ENCODE measurements at regions of chr9 and their contacts with region 1.

Region 1: GRCh38 chr9:77456829-77457437 is 191.2 kb downstream of the GNA14 start:
- DNase-seq: peak; percentile 81
- CTCF ChIP-seq: peak; percentile 84

Region 2: DNA sequence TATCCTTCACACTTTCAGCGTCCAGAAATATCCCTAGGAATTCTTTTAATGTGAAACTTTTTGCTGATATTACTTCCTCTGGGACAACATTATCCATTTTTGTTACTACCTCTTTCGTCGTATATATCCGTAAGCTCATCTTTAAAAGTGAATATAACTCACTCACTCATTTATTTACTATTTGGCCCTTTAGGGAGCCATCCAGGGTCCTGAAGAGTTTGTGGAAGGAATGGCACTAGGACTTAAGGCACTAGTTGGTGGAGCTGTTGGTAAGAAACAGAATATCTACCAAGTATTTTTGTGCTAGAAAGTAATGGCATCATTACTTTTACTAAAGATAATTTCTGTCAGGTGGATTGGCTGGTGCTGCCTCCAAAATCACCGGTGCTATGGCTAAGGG is 86.9 kb before region 1 on chr9:
- in situ Hi-C with region 1: no loop called
- DNase-seq: no peak
- CTCF ChIP-seq: no peak

Region 3: DNA sequence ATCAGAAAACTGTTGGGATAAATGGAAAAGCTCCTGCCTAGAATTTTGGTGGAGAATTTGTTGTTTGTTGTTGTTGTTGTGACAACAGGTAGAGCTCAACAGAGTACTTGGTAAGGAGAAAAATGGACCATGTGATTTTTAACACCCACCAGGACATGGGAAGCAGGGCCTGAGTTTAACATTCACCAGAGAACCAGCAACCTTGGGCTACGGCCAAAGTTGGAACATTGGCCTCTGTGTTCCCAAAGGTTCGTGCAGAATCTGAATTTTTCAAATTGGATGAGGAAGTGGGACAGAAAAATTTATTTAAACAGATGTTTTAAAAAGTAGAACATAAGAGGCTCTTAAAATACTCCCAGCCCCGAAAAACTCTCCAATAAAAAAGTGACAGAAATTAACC is 64.2 kb after region 1 on chr9:
- in situ Hi-C with region 1: no loop called
- DNase-seq: no peak
- CTCF ChIP-seq: no peak

Region 4: GRCh38 chr9:77731930-77732329 is 275.0 kb after region 1 on chr9:
- in situ Hi-C with region 1: loop called (anchors 25 kb)
- DNase-seq: no peak
- CTCF ChIP-seq: no peak

Region 5: DNA sequence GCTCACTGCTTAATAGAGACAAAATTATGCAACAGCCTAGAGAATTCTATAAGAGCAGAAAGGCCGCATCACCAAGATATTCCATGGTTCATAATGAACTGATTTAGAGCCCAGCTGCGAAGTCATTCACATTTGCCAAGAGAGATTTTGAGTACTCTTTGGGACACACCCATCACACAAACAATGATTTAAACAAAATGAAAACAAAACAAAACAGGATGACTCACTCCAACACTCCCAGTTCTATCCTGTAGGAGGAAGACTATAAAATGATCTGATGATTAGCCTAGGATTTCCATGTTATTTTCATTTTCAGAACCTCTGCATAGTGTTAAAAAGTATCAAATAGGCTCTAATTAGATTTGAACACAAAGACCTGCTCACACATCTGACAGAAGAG is 337.0 kb after region 1 on chr9:
- in situ Hi-C with region 1: no loop called
- DNase-seq: no peak
- CTCF ChIP-seq: no peak